ENCODE measurements at regions of chr1 and their contacts with region 1.

Region 1: GRCh38 chr1:23216771-23217420 is 406 bp downstream of the HTR1D start:
- DNase-seq: no peak
- ATAC-seq: peak in 1 of 4 donors; percentile 43
- H3K4me3 ChIP-seq: peak overlapping the region in 11 of 12 donors; percentile 23 to 54 (median 48)
- H3K27ac ChIP-seq: no peak overlapping the region
- H3K4me1 ChIP-seq: peaks cover 0 to 16% (median 10%) of the 10 kb centered on the region in 12 donors
- H3K27me3 ChIP-seq: peaks cover 18 to 63% (median 39%) of the 10 kb centered on the region in 9 donors
- CTCF ChIP-seq: peak; percentile 46 to 74 (median 64)
- POLR2A ChIP-seq: no peak

Region 2: GRCh38 chr1:22969304-22969709 is 247.6 kb before region 1 on chr1:
- intact Hi-C with region 1: no loop called
- DNase-seq: no peak
- ATAC-seq: peak; percentile 53 to 83 (median 66)
- H3K4me3 ChIP-seq: no peak overlapping the region
- H3K27ac ChIP-seq: no peak overlapping the region
- H3K4me1 ChIP-seq: no peaks in the 10 kb centered on the region
- H3K27me3 ChIP-seq: peaks cover 0 to 54% (median 11%) of the 10 kb centered on the region in 9 donors
- CTCF ChIP-seq: no peak
- POLR2A ChIP-seq: no peak

Region 3: GRCh38 chr1:23263380-23263887 is 46.5 kb after region 1 on chr1:
- intact Hi-C with region 1: loop called in 1 of 10 experiments (anchors 10 kb)
- DNase-seq: no peak
- ATAC-seq: no peak
- H3K4me3 ChIP-seq: no peak overlapping the region
- H3K27ac ChIP-seq: no peak overlapping the region
- H3K4me1 ChIP-seq: no peaks in the 10 kb centered on the region
- H3K27me3 ChIP-seq: no peaks in the 10 kb centered on the region
- CTCF ChIP-seq: no peak
- POLR2A ChIP-seq: no peak

Region 4: GRCh38 chr1:23282957-23283356 is 66.1 kb after region 1 on chr1:
- intact Hi-C with region 1: loop called in 4 of 10 experiments (anchors 5 to 10 kb)
- DNase-seq: no peak
- ATAC-seq: no peak
- H3K4me3 ChIP-seq: no peak overlapping the region
- H3K27ac ChIP-seq: no peak overlapping the region
- H3K4me1 ChIP-seq: peaks cover 0 to 9% (median 0%) of the 10 kb centered on the region in 12 donors
- H3K27me3 ChIP-seq: no peaks in the 10 kb centered on the region
- CTCF ChIP-seq: no peak
- POLR2A ChIP-seq: no peak

Region 5: GRCh38 chr1:23539698-23540266 is 322.9 kb after region 1 on chr1:
- intact Hi-C with region 1: loop called in 1 of 10 experiments (anchors 5 kb)
- DNase-seq: peak; percentile 79 to 89 (median 82)
- ATAC-seq: peak; percentile 45 to 92 (median 90)
- H3K4me3 ChIP-seq: peak overlapping the region in 5 of 12 donors; percentile 2 to 29 (median 15)
- H3K27ac ChIP-seq: peak overlapping the region in 2 of 12 donors; percentile 3 to 21
- H3K4me1 ChIP-seq: peaks cover 0 to 13% (median 9%) of the 10 kb centered on the region in 12 donors
- H3K27me3 ChIP-seq: no peaks in the 10 kb centered on the region
- CTCF ChIP-seq: peak; percentile 89 to 96 (median 92)
- POLR2A ChIP-seq: no peak

Measured in heart left ventricle (tissue), 16 donors.